Calu3 (cell line): ENCODE measurements at regions of chr19 and their contacts with region 1.

Region 1: GRCh38 chr19:1901940-1902441 is 3.2 kb upstream of the ADAT3 start:
- DNase-seq: no peak
- H3K4me3 Mint-ChIP-seq: no peak overlapping the region
- H3K27ac Mint-ChIP-seq: no peak overlapping the region
- H3K4me1 Mint-ChIP-seq: peaks cover 9% of the 10 kb centered on the region
- H3K27me3 Mint-ChIP-seq: no peaks in the 10 kb centered on the region
- CTCF ChIP-seq: no peak

Region 2: DNA sequence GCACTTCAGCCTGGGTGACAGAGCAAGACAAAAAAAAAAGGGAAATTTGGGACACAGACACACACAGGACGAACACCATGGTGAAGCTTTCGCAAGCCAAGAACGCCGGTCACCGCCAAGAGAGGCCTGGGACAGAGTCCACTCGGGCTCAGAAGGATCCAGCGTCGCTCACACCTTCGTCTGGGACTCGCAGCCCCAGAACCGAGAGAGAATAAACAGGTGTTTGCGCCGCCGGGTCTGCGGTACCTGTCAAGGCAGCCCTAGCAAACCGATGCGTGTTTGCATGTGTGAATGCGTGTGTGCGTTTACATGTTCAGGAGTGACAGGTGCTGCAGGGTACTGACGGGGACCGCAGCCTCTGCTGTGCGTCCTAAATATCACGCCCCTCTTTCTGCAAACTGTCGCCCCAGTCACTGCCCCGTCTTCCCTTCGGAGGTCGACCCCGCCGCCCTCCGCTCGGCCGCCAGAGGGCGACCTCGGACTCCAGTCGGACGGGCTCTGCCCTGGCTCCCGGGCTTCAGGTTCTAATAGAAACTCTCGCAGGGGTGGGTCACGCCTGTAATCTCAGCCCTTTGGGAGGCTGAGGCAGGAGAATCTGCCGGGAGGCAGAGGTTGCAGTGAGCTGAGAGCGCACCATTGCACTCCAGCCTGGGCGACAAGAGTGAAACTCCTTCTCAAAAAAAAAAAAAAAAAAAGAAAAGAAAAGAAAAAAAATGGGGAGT is 27.2 kb after region 1 on chr19:
- CTCF ChIA-PET with region 1: interaction called, 14 read pairs
- intact Hi-C with region 1: no loop called
- DNase-seq: peak; percentile 80
- H3K4me3 Mint-ChIP-seq: peak overlapping the region; percentile 65
- H3K27ac Mint-ChIP-seq: no peak overlapping the region
- H3K4me1 Mint-ChIP-seq: no peaks in the 10 kb centered on the region
- H3K27me3 Mint-ChIP-seq: no peaks in the 10 kb centered on the region
- CTCF ChIP-seq: peak; percentile 74

Region 3: GRCh38 chr19:2171349-2172145 is 269.6 kb after region 1 on chr19:
- CTCF ChIA-PET with region 1: no interaction called
- intact Hi-C with region 1: no loop called
- DNase-seq: peak; percentile 43
- H3K4me3 Mint-ChIP-seq: no peak overlapping the region
- H3K27ac Mint-ChIP-seq: no peak overlapping the region
- H3K4me1 Mint-ChIP-seq: peaks cover 8% of the 10 kb centered on the region
- H3K27me3 Mint-ChIP-seq: no peaks in the 10 kb centered on the region
- CTCF ChIP-seq: no peak